Heart left ventricle (tissue), 16 donors: ENCODE measurements at regions of chr12 and their contacts with region 1.

Region 1: GRCh38 chr12:32302218-32303173 is 96.9 kb upstream of the FGD4 start:
- DNase-seq: peak in 1 of 5 donors; percentile 28
- ATAC-seq: peak in 3 of 4 donors; percentile 62 to 73 (median 73)
- H3K4me3 ChIP-seq: no peak overlapping the region
- H3K27ac ChIP-seq: no peak overlapping the region
- H3K4me1 ChIP-seq: peaks cover 0 to 4% (median 0%) of the 10 kb centered on the region in 12 donors
- H3K27me3 ChIP-seq: no peaks in the 10 kb centered on the region
- CTCF ChIP-seq: peak; percentile 21 to 63 (median 39)
- POLR2A ChIP-seq: no peak

Region 2: GRCh38 chr12:31406345-31406744 is 896.2 kb before region 1 on chr12:
- intact Hi-C with region 1: loop called in 1 of 10 experiments (anchors 10 kb)
- DNase-seq: no peak
- ATAC-seq: no peak
- H3K4me3 ChIP-seq: no peak overlapping the region
- H3K27ac ChIP-seq: no peak overlapping the region
- H3K4me1 ChIP-seq: peaks cover 0 to 13% (median 0%) of the 10 kb centered on the region in 12 donors
- H3K27me3 ChIP-seq: no peaks in the 10 kb centered on the region
- CTCF ChIP-seq: no peak
- POLR2A ChIP-seq: no peak

Region 3: DNA sequence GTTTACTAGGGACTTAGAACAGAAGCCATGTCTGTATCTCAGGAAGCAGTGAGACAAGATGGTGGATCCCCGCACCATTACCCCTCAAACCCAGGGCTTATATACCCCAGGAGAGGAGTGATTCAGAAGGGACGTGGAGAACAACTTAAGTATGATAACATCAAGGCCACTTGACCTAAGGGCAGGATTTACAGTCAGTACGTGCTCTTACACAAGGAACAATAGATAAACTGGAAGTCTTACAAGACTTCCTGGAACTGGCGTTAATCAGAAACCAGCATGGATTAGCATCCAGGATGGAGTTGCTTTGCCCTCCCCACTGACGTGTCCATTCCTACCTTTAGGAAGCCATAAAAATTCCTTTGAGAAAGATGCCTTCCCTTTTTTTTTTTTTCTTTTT is 651.6 kb before region 1 on chr12:
- intact Hi-C with region 1: loop called in 7 of 10 experiments (anchors 5 to 10 kb)
- DNase-seq: no peak
- ATAC-seq: peak in 3 of 4 donors; percentile 10 to 77 (median 43)
- H3K4me3 ChIP-seq: no peak overlapping the region
- H3K27ac ChIP-seq: peak overlapping the region in 3 of 12 donors; percentile 3 to 54 (median 36)
- H3K4me1 ChIP-seq: peaks cover 0 to 26% (median 0%) of the 10 kb centered on the region in 12 donors
- H3K27me3 ChIP-seq: no peaks in the 10 kb centered on the region
- CTCF ChIP-seq: no peak
- POLR2A ChIP-seq: no peak

Region 4: DNA sequence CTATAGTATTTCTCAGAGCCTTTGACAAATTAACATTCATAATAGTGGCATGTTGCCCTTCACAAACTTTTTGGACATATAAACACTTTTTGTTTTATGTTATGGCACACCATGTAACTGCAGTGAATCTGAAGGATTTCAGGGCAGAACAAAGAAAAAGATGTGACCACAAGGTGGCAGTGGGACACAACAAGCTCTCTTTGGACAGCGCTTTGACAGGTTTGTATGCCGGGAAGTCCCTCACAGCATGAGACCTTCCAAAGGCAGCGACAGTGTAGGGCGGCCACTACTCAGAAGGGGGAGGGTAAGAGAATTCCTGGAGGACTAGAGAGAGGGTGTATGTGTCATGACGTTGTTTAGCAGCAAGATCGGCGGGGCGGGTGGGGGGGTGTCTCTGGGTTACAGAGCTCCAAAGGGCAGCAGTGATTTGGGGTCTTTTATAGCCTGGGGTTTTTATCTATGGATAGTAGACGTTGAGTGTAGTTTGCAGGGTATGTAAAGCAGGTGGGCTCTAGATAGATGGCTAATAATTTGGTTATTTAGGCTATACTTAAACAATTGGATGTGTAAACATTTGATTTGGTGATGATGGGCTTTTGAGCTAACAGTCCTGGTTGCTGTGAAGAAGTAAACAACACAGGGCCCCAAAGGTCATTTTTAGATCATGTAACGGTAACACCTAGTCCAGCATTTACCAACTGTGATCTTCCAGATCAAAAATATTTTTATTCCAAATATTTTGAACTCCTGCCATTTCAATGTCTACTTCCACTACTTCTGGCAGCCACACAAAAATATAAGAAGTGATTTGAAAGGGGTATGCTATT is 620.1 kb before region 1 on chr12:
- intact Hi-C with region 1: loop called in 5 of 10 experiments (anchors 2 to 10 kb)
- DNase-seq: peak in 4 of 5 donors; percentile 34 to 56 (median 43)
- ATAC-seq: peak; percentile 58 to 88 (median 78)
- H3K4me3 ChIP-seq: no peak overlapping the region
- H3K27ac ChIP-seq: no peak overlapping the region
- H3K4me1 ChIP-seq: peaks cover 0 to 11% (median 0%) of the 10 kb centered on the region in 12 donors
- H3K27me3 ChIP-seq: no peaks in the 10 kb centered on the region
- CTCF ChIP-seq: peak; percentile 48 to 73 (median 66)
- POLR2A ChIP-seq: no peak

Region 5: GRCh38 chr12:31887109-31887811 is 415.2 kb before region 1 on chr12:
- intact Hi-C with region 1: loop called in 1 of 10 experiments (anchors 10 kb)
- DNase-seq: peak in 1 of 5 donors; percentile 32
- ATAC-seq: peak in 1 of 4 donors; percentile 51
- H3K4me3 ChIP-seq: peak overlapping the region in 1 of 12 donors; percentile 39
- H3K27ac ChIP-seq: peak overlapping the region in 1 of 12 donors; percentile 87
- H3K4me1 ChIP-seq: peaks cover 0 to 23% (median 0%) of the 10 kb centered on the region in 12 donors
- H3K27me3 ChIP-seq: no peaks in the 10 kb centered on the region
- CTCF ChIP-seq: no peak
- POLR2A ChIP-seq: no peak

Region 6: DNA sequence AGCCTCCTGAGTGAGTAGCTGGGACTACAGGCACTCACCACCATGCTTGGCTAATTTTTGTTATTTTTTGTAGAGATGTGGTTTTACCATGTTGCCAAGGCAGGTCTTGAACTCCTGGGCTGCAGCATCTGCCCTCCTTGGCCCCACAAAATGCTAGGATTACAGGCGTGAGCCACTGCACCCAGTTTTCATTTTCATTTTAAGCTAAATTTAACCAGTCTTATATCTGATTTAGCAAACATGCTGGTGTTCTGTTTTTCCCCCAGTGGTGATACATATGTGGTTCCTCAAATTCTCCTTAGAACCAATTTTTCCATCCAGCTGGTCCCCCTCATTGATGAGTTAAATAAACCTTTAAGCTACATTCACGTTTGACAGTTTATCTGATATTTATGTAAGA is 239.6 kb before region 1 on chr12:
- intact Hi-C with region 1: loop called in 3 of 10 experiments (anchors 2 to 5 kb)
- DNase-seq: no peak
- ATAC-seq: no peak
- H3K4me3 ChIP-seq: no peak overlapping the region
- H3K27ac ChIP-seq: no peak overlapping the region
- H3K4me1 ChIP-seq: peaks cover 0 to 4% (median 0%) of the 10 kb centered on the region in 12 donors
- H3K27me3 ChIP-seq: no peaks in the 10 kb centered on the region
- CTCF ChIP-seq: no peak
- POLR2A ChIP-seq: no peak